K562 (cell line): ENCODE measurements at regions of chr14 and their contacts with region 1.

Region 1: DNA sequence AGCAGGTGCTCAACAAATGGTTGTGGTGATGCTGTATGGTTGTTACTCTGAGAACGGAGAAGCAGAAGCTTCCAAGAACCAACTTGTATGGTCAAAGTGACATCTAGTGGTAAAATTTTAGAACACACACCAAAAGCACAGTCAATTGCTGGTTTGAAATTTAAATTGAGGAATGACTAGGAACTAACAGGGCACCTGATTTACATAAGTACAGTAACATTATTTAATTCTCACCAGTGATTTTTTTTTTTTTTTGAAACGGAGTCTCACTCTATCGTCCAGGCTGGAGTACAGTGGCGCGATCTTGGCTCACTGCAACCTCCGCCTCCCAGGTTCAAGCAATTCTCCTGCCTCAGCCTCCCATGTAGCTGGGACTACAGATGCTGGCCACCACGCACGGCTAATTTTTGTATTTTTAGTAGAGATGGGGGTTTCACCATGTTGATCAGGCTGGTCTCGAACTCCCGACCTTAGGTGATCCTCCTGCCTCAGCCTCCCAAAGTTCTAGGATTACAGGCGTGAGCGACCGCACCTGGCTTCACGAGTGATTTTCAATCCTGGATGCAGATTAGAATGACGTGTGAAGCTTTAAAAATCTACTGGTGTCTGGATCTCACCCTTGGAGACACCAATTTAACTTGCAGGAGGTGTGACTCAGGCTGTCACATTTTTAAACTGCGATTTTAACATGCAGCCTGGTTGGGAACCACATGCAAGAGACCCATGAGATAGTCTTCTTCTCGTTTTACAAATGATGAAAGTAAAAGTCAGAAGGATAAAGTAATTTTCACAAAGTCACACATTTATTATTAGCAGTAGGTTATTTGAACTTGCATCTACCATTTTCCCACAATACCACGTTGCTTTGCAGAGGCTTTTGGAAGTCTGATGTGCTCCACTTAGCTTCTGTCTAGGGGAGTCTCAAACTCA is 14.1 kb upstream of the NUMB start:
- DNase-seq: peak; percentile 38 to 60 (median 44)
- ATAC-seq: peak; percentile 82
- H3K4me3 ChIP-seq: no peak overlapping the region
- H3K27ac ChIP-seq: no peak overlapping the region
- H3K4me1 ChIP-seq: peaks cover 0 to 10% of the 10 kb centered on the region in 2 experiments; a peak in 2 of 5 replicates
- H3K27me3 ChIP-seq: no peaks in the 10 kb centered on the region
- CTCF ChIP-seq: peak; percentile 53 to 81 (median 60); a peak in 5 of 6 replicates
- EP300 ChIP-seq: no peak
- POLR2A ChIP-seq: no peak
- RAD21 ChIP-seq: peak; percentile 76 to 89

Region 2: GRCh38 chr14:73049428-73049827 is 423.0 kb before region 1 on chr14:
- CTCF ChIA-PET with region 1: no interaction called
- POLR2A ChIA-PET with region 1: no interaction called
- in situ Hi-C with region 1: loop called (anchors 25 kb)
- intact Hi-C with region 1: loop called (anchors 5 kb)
- DNase-seq: no peak
- ATAC-seq: no peak
- H3K4me3 ChIP-seq: no peak overlapping the region
- H3K27ac ChIP-seq: no peak overlapping the region
- H3K4me1 ChIP-seq: no peaks in the 10 kb centered on the region; a peak in 1 of 5 replicates
- H3K27me3 ChIP-seq: no peaks in the 10 kb centered on the region
- CTCF ChIP-seq: no peak
- EP300 ChIP-seq: no peak
- POLR2A ChIP-seq: no peak
- RAD21 ChIP-seq: no peak

Region 3: DNA sequence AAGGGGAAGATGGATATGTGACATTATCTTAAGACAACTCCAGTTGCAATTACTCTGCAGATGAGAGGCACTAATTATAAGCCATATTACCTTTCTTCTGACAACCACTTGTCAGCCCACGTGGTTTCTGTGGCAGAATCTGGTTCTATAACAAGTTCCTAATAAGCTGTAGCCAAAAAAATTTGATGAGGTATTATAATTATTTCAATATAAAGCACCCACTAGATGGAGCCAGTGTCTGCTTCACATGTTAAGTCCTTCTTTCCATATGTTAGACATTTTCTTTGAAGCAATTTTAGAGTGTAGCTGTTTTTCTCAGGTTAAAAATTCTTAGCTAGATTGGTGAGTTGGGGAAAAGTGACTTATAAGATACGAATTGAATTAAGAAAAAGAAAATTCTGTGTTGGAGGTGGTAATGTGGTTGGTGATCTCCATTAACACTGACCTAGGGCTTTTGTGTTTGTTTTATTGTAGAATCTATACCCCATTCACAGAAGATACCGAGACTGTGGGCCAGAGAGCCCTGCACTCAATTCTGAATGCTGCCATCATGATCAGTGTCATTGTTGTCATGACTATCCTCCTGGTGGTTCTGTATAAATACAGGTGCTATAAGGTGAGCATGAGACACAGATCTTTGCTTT is 299.2 kb before region 1 on chr14:
- CTCF ChIA-PET with region 1: interaction called, 9 read pairs
- POLR2A ChIA-PET with region 1: no interaction called
- in situ Hi-C with region 1: loop called (anchors 10 kb)
- intact Hi-C with region 1: loop called (anchors 5 kb)
- DNase-seq: peak in 3 of 4 experiments; percentile 6 to 32 (median 8)
- ATAC-seq: 0 out of 3 replicates have a peak, but pooled peaks have one; percentile 32
- H3K4me3 ChIP-seq: no peak overlapping the region
- H3K27ac ChIP-seq: no peak overlapping the region
- H3K4me1 ChIP-seq: peaks cover 0 to 4% of the 10 kb centered on the region in 2 experiments; a peak in 2 of 5 replicates
- H3K27me3 ChIP-seq: no peaks in the 10 kb centered on the region
- CTCF ChIP-seq: peak in 2 of 3 experiments; percentile 15 to 59; a peak in 3 of 6 replicates
- EP300 ChIP-seq: no peak
- POLR2A ChIP-seq: no peak
- RAD21 ChIP-seq: peak in 1 of 2 experiments; percentile 43; a peak in 2 of 4 replicates

Region 4: GRCh38 chr14:73239393-73240241 is 232.8 kb before region 1 on chr14:
- CTCF ChIA-PET with region 1: no interaction called
- POLR2A ChIA-PET with region 1: no interaction called
- in situ Hi-C with region 1: no loop called
- intact Hi-C with region 1: loop called (anchors 5 kb)
- DNase-seq: no peak
- ATAC-seq: no peak; the same call in 1 of the 3 replicates
- H3K4me3 ChIP-seq: no peak overlapping the region
- H3K27ac ChIP-seq: no peak overlapping the region
- H3K4me1 ChIP-seq: peaks cover 0 to 22% of the 10 kb centered on the region in 2 experiments; a peak in 2 of 5 replicates
- H3K27me3 ChIP-seq: peaks cover 25 to 72% of the 10 kb centered on the region in 2 experiments; a peak in 4 of 5 replicates
- CTCF ChIP-seq: no peak
- EP300 ChIP-seq: no peak
- POLR2A ChIP-seq: no peak
- RAD21 ChIP-seq: no peak

Region 5: GRCh38 chr14:73295198-73295796 is 177.2 kb before region 1 on chr14:
- CTCF ChIA-PET with region 1: interaction called, 23 read pairs
- POLR2A ChIA-PET with region 1: no interaction called
- in situ Hi-C with region 1: loop called (anchors 5 kb)
- intact Hi-C with region 1: loop called (anchors 5 kb)
- DNase-seq: peak; percentile 10 to 32 (median 14)
- ATAC-seq: peak; percentile 67; the same call in 2 of the 3 replicates
- H3K4me3 ChIP-seq: no peak overlapping the region
- H3K27ac ChIP-seq: no peak overlapping the region
- H3K4me1 ChIP-seq: no peaks in the 10 kb centered on the region
- H3K27me3 ChIP-seq: no peaks in the 10 kb centered on the region
- CTCF ChIP-seq: peak; percentile 37 to 65 (median 46); a peak in 4 of 6 replicates
- EP300 ChIP-seq: no peak
- POLR2A ChIP-seq: no peak
- RAD21 ChIP-seq: peak; percentile 36 to 72

Region 6: DNA sequence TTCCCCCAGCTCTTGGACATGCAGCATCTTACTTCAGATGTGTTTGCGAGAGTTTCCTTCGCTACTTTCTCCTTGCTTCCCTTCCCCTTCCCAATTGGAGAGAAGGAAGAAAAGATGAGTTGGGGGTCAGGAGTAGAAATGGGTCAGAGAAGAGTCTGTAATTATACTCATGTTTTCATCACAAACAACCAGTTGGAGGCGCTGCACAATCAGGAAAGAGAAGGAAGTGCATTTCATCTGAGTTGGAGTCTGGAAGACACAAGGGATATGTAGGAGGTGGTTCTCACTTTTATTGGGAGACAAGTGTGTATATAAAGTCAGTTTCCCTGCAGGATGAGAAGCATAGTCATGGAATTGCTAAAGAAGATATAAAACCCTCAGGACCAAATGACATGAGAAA is 735.5 kb after region 1 on chr14:
- CTCF ChIA-PET with region 1: no interaction called
- POLR2A ChIA-PET with region 1: no interaction called
- in situ Hi-C with region 1: no loop called
- intact Hi-C with region 1: no loop called
- DNase-seq: peak in 1 of 4 experiments; percentile 18
- ATAC-seq: peak; percentile 45; the same call in 1 of the 3 replicates
- H3K4me3 ChIP-seq: no peak overlapping the region
- H3K27ac ChIP-seq: no peak overlapping the region
- H3K4me1 ChIP-seq: peaks cover 0 to 2% of the 10 kb centered on the region in 2 experiments; a peak in 1 of 5 replicates
- H3K27me3 ChIP-seq: no peaks in the 10 kb centered on the region
- CTCF ChIP-seq: peak; percentile 46 to 49 (median 48); a peak in 5 of 6 replicates
- EP300 ChIP-seq: no peak
- POLR2A ChIP-seq: no peak
- RAD21 ChIP-seq: peak in 1 of 2 experiments; percentile 51; a peak in 2 of 4 replicates